Posterior vena cava (tissue), 2 donors: ENCODE measurements at regions of chr5 and their contacts with region 1.

Region 1: DNA sequence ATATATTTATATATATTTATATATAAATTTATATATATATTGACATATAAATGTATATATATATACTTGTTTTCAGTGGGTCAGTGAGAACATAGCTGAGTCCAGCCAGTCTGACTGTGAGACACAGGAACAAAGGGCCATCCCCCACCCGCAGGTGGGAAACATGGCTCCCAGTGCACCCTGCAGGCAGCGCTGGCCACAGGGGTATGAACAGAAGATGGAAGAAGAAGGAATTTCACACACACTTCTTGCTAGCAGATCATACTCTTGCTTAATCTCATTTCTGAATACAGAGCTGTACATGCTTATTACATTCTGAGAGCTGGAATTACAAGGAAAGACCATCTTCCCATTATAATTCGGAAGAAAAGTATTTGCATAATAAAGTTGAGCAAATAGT is 595.4 kb downstream of the IRX1 start:
- DNase-seq: no peak

Region 2: GRCh38 chr5:3778000-3778550 is 413.0 kb before region 1 on chr5:
- intact Hi-C with region 1: loop called in 1 of 2 experiments (anchors 5 kb)
- DNase-seq: no peak

Region 3: DNA sequence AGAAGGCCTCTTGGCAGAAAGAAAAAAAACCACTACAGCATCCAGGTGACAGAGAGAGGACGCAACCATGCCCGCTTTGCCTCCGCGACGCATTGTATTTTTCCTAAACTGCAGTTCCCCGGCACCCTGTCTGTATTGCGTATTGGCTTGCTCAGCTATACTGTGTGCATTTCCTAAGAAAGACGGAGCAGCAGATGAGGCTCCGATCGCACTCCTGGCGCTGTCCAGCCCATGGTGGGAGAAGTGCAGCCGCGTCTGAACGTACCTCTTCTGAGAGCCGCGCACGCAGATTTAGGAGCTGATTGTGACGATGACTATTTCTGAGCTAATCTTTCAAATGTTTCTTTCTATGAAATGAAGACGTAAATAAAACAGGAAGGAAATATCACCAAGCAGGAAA is 228.9 kb before region 1 on chr5:
- intact Hi-C with region 1: no loop called
- DNase-seq: no peak